A549 (cell line): ENCODE measurements at regions of chr19 and their contacts with region 1.

Region 1: DNA sequence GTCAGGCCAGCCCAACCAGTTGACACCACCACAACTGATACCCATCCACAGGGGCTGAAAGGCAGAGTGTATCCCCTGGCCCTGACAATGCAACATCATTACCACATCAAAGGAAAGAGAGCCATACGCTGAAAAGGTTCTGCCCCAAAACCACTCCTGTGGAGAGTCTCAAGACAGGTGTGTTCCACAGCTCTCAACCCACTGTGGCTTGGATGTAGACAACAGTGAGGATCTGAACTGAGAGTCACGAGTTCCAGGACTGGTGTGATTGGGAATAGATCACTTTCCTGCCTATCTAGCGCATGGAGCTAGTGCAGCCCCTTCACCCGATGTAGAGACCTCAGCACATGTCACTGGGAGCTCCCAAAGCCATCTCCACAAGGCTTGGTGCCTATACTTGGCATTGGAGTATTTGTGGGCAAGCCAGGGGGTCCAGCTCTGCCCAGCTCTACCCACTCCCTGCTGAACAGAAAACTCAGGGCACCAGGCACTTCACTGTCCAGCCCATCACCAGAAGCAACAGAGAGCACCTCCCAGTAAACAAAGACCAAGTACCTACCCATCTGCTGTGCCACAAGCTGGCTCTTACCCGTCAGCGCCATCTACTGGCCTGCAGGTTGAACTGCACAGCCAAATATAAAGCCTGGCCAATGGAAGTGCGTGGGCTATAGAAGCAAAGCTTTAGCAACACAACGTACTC is 579.5 kb downstream of the UQCRFS1 start:
- DNase-seq: peak in 1 of 2 experiments; percentile 61
- ATAC-seq: peak in 1 of 2 experiments; percentile 72; a peak in 3 of 6 replicates
- H3K4me3 ChIP-seq: no peak overlapping the region
- H3K27ac ChIP-seq: no peak overlapping the region
- H3K4me1 ChIP-seq: no peaks in the 10 kb centered on the region
- CTCF ChIP-seq: peak; percentile 41
- EP300 ChIP-seq: no peak
- POLR2A ChIP-seq: no peak
- RAD21 ChIP-seq: peak in 1 of 2 experiments; percentile 68; a peak in 2 of 5 replicates

Region 2: DNA sequence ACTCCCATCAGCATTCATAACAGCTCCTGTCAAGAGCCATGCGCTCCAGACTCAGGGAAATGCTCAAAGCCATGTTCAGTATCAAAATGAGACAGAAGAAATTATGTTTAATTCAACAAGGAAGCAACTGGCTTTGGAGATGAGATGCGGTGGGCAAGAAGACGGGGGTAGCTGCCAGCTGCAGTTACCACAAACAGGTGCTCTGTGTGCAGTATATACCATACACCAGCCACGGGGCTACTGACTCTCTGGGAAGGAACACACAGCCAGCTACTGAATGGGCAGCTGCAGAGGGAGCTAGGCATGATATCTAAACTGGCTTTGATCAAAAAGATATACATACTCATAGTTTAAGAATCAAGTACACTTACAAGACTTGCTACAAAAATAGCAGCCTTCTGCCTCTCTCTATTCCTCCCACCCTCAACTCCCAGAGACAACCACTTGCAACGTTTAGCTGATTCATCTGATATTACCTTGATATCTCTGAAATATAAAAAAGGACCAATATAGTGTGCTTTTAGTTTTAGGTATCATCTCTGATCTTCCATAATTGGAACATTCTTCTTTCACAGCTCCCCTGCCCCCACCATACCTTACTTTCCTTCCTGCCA is 13.5 kb before region 1 on chr19:
- CTCF ChIA-PET with region 1: interaction called, 25 read pairs
- POLR2A ChIA-PET with region 1: no interaction called
- DNase-seq: no peak
- ATAC-seq: no peak
- H3K4me3 ChIP-seq: no peak overlapping the region
- H3K27ac ChIP-seq: no peak overlapping the region
- H3K4me1 ChIP-seq: no peaks in the 10 kb centered on the region
- CTCF ChIP-seq: no peak
- EP300 ChIP-seq: no peak
- POLR2A ChIP-seq: no peak
- RAD21 ChIP-seq: no peak